Left ventricle myocardium inferior (tissue), 1 donor: ENCODE measurements at regions of chr5 and their contacts with region 1.

Region 1: GRCh38 chr5:154072414-154073171 is 33.8 kb downstream of the MFAP3 start:
- DNase-seq: peak; percentile 81
- H3K4me3 ChIP-seq: no peak overlapping the region
- H3K27ac ChIP-seq: peak overlapping the region; percentile 44
- H3K4me1 ChIP-seq: peaks cover 29% of the 10 kb centered on the region
- H3K27me3 ChIP-seq: no peaks in the 10 kb centered on the region
- CTCF ChIP-seq: peak; percentile 91

Region 2: DNA sequence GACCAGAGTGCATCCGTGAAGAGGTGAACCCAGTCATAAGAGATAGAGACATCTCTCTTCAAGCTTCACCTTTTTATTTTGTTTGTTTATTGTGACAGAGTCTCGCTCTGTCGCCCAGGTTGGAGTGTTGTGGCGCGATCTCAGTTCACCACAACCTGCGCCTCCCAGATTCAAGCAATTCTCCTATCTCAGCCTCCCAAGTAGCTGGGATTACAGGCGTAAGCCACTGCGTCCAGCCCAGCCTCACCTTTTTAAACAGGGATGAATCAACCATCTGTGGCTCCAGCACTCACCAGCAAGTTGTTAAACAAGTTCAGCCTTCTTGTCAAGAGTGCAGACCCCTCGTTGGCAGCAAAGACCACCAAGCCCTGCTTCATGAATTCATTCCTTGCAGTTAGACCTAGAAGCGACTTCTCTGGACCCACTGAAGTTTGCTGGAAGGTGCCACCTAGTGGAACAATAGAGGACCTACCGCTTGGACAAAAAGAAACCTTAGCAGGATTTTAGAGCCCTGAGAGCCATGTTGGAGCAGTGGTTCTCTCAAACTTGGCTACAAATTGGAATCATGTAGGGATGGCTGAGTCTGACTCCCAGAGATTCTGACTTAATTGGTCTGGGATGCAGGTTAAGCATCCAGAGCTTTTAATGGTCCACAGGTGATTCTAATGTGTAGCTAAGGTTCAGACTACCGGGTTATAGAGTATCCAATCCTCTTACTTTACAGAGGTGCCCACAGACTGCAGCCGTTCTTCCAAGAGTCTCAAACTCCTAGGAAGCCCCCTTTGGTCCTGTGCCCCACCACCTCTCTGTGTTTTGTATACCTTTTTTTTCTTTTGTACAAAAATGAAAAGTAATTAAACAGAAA is 107.5 kb after region 1 on chr5:
- intact Hi-C with region 1: loop called (anchors 5 kb)
- DNase-seq: no peak
- H3K4me3 ChIP-seq: no peak overlapping the region
- H3K27ac ChIP-seq: no peak overlapping the region
- H3K4me1 ChIP-seq: no peaks in the 10 kb centered on the region
- H3K27me3 ChIP-seq: no peaks in the 10 kb centered on the region
- CTCF ChIP-seq: peak; percentile 88

Region 3: GRCh38 chr5:154405078-154405792 is 332.6 kb after region 1 on chr5:
- intact Hi-C with region 1: loop called (anchors 5 kb)
- DNase-seq: peak; percentile 82
- H3K4me3 ChIP-seq: peak overlapping the region; percentile 58
- H3K27ac ChIP-seq: no peak overlapping the region
- H3K4me1 ChIP-seq: peaks cover 11% of the 10 kb centered on the region
- H3K27me3 ChIP-seq: no peaks in the 10 kb centered on the region
- CTCF ChIP-seq: peak; percentile 93

Region 4: GRCh38 chr5:154593071-154593470 is 520.5 kb after region 1 on chr5:
- intact Hi-C with region 1: no loop called
- DNase-seq: no peak
- H3K4me3 ChIP-seq: no peak overlapping the region
- H3K27ac ChIP-seq: no peak overlapping the region
- H3K4me1 ChIP-seq: no peaks in the 10 kb centered on the region
- H3K27me3 ChIP-seq: no peaks in the 10 kb centered on the region
- CTCF ChIP-seq: no peak